CD8-positive, alpha-beta T cell (primary cell): ENCODE measurements at regions of chr19 and their contacts with region 1.

Region 1: DNA sequence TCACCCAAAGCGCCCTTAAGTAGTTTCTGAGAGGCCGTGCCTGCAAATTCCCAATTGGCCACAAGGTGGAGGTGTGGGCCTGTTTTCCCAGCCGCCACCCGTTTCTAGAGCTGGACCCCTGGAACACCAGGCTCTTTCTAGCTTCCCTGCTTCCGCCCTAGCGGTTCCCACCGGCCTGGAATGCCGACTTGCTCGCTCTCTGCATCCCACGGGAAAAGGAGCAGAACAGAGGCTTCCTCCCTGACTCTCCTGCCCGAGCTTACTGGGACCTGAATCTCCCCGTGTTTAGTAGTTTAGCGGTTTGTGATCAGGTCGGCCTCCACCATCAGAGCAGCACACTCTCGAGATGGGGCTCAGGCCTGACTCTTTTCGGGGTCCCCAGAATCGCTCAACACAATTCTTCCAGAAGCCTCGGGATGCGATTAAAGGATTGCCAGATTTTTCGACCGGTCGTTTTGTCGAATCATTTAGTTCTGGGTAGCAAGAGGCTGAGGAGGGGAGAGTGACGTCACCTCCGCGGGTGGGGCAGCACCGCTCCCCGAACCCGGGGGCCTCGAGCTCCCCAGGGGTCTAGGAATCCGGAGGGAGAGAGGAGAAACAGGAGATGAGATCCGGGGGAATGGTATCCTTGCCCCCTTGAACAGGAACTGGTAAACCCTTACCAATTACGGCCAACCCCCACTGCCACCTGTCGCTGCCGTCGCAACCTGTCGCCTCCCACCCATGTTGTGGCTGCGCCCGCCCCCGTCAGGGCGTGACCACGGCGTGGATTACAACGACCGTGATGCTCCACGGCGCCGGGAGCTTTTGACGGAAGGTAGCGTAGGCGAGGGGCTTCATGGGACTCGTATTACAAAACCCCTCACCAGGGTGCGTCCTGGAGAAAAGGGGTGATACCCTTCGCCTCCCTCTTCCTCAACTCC is 8.0 kb downstream of the NAPSA start:
- DNase-seq: peak; percentile 73 to 94 (median 90)
- ATAC-seq: peak; percentile 83
- H3K4me3 ChIP-seq: peak overlapping the region; percentile 62 to 78
- H3K4me3 Mint-ChIP-seq: peak overlapping the region; percentile 89
- H3K27ac ChIP-seq: peak overlapping the region; percentile 90 to 96
- H3K27ac Mint-ChIP-seq: peak overlapping the region; percentile 96
- H3K4me1 ChIP-seq: peaks cover 20% of the 10 kb centered on the region
- H3K4me1 Mint-ChIP-seq: peaks cover 30% of the 10 kb centered on the region
- H3K27me3 ChIP-seq: no peaks in the 10 kb centered on the region
- H3K27me3 Mint-ChIP-seq: peaks cover 3% of the 10 kb centered on the region
- CTCF ChIP-seq: peak; percentile 85

Region 2: GRCh38 chr19:50008532-50008931 is 348.9 kb before region 1 on chr19:
- CTCF ChIA-PET with region 1: no interaction called
- POLR2A ChIA-PET with region 1: no interaction called
- intact Hi-C with region 1: no loop called
- DNase-seq: no peak
- ATAC-seq: no peak
- H3K4me3 ChIP-seq: no peak overlapping the region
- H3K4me3 Mint-ChIP-seq: no peak overlapping the region
- H3K27ac ChIP-seq: no peak overlapping the region
- H3K27ac Mint-ChIP-seq: no peak overlapping the region
- H3K4me1 ChIP-seq: no peaks in the 10 kb centered on the region
- H3K4me1 Mint-ChIP-seq: peaks cover 9% of the 10 kb centered on the region
- H3K27me3 ChIP-seq: no peaks in the 10 kb centered on the region
- H3K27me3 Mint-ChIP-seq: no peaks in the 10 kb centered on the region
- CTCF ChIP-seq: no peak

Region 3: DNA sequence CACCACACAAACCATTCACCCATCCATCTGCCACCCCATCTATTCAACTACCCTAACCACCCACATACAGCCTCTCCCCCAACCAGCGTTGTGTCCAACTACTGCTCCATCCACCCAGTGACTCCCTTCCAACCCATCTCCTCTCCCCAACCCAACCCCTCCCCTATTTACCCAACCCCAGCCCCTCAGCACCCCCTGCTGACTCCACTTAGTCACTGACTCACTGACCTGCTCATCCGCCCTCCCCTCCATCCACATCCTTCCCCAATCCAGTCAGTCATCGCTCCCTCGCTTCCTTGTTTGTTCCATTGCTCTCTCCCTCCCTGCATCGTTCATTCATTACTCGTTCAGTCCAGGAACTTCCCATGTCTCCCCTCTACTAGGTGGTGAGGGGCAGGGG is 67.4 kb before region 1 on chr19:
- CTCF ChIA-PET with region 1: no interaction called
- POLR2A ChIA-PET with region 1: no interaction called
- intact Hi-C with region 1: no loop called
- DNase-seq: no peak
- ATAC-seq: no peak
- H3K4me3 ChIP-seq: no peak overlapping the region
- H3K4me3 Mint-ChIP-seq: no peak overlapping the region
- H3K27ac ChIP-seq: no peak overlapping the region
- H3K27ac Mint-ChIP-seq: no peak overlapping the region
- H3K4me1 ChIP-seq: no peaks in the 10 kb centered on the region
- H3K4me1 Mint-ChIP-seq: no peaks in the 10 kb centered on the region
- H3K27me3 ChIP-seq: peaks cover 0 to 2% of the 10 kb centered on the region in 2 experiments
- H3K27me3 Mint-ChIP-seq: peaks cover 35% of the 10 kb centered on the region
- CTCF ChIP-seq: no peak

Region 4: GRCh38 chr19:50315773-50316448 is 41.5 kb before region 1 on chr19:
- CTCF ChIA-PET with region 1: no interaction called
- POLR2A ChIA-PET with region 1: no interaction called
- intact Hi-C with region 1: no loop called
- DNase-seq: peak in 1 of 9 experiments; percentile 53
- ATAC-seq: peak; percentile 49
- H3K4me3 ChIP-seq: peak overlapping the region in 1 of 2 experiments; percentile 27
- H3K4me3 Mint-ChIP-seq: peak overlapping the region; percentile 42
- H3K27ac ChIP-seq: no peak overlapping the region
- H3K27ac Mint-ChIP-seq: no peak overlapping the region
- H3K4me1 ChIP-seq: peaks cover 12% of the 10 kb centered on the region
- H3K4me1 Mint-ChIP-seq: peaks cover 15% of the 10 kb centered on the region
- H3K27me3 ChIP-seq: peaks cover 20 to 26% of the 10 kb centered on the region in 2 experiments
- H3K27me3 Mint-ChIP-seq: peaks cover 65% of the 10 kb centered on the region
- CTCF ChIP-seq: no peak

Region 5: GRCh38 chr19:50368649-50369570 is 11.5 kb after region 1 on chr19:
- CTCF ChIA-PET with region 1: interaction called, 44 read pairs
- POLR2A ChIA-PET with region 1: no interaction called
- intact Hi-C with region 1: loop called (anchors 1 kb)
- DNase-seq: peak; percentile 59 to 91 (median 79)
- ATAC-seq: peak; percentile 81
- H3K4me3 ChIP-seq: peak overlapping the region; percentile 52 to 66
- H3K4me3 Mint-ChIP-seq: peak overlapping the region; percentile 87
- H3K27ac ChIP-seq: peak overlapping the region; percentile 32 to 49
- H3K27ac Mint-ChIP-seq: peak overlapping the region; percentile 82
- H3K4me1 ChIP-seq: peaks cover 15% of the 10 kb centered on the region
- H3K4me1 Mint-ChIP-seq: peaks cover 28% of the 10 kb centered on the region
- H3K27me3 ChIP-seq: no peaks in the 10 kb centered on the region
- H3K27me3 Mint-ChIP-seq: no peaks in the 10 kb centered on the region
- CTCF ChIP-seq: peak; percentile 86

Region 6: GRCh38 chr19:50383852-50384684 is 26.6 kb after region 1 on chr19 and contains the start of gene POLD1:
- CTCF ChIA-PET with region 1: interaction called, 4 read pairs
- POLR2A ChIA-PET with region 1: interaction called, 10 read pairs
- intact Hi-C with region 1: loop called (anchors 1 kb)
- DNase-seq: peak; percentile 98 to 100 (median 98)
- ATAC-seq: peak; percentile 93
- H3K4me3 ChIP-seq: peak within 1 kb of the TSS; percentile 70 to 79
- H3K4me3 Mint-ChIP-seq: peak within 1 kb of the TSS; percentile 97
- H3K27ac ChIP-seq: peak within 1 kb of the TSS; percentile 45 to 72
- H3K27ac Mint-ChIP-seq: peak within 1 kb of the TSS; percentile 91
- H3K4me1 ChIP-seq: peaks cover 14% of the 10 kb centered on the region
- H3K4me1 Mint-ChIP-seq: peaks cover 33% of the 10 kb centered on the region
- H3K27me3 ChIP-seq: no peaks in the 10 kb centered on the region
- H3K27me3 Mint-ChIP-seq: no peaks in the 10 kb centered on the region
- CTCF ChIP-seq: no peak
- total RNA-seq, gene POLD1: 19.4 to 21.8 TPM

Region 7: DNA sequence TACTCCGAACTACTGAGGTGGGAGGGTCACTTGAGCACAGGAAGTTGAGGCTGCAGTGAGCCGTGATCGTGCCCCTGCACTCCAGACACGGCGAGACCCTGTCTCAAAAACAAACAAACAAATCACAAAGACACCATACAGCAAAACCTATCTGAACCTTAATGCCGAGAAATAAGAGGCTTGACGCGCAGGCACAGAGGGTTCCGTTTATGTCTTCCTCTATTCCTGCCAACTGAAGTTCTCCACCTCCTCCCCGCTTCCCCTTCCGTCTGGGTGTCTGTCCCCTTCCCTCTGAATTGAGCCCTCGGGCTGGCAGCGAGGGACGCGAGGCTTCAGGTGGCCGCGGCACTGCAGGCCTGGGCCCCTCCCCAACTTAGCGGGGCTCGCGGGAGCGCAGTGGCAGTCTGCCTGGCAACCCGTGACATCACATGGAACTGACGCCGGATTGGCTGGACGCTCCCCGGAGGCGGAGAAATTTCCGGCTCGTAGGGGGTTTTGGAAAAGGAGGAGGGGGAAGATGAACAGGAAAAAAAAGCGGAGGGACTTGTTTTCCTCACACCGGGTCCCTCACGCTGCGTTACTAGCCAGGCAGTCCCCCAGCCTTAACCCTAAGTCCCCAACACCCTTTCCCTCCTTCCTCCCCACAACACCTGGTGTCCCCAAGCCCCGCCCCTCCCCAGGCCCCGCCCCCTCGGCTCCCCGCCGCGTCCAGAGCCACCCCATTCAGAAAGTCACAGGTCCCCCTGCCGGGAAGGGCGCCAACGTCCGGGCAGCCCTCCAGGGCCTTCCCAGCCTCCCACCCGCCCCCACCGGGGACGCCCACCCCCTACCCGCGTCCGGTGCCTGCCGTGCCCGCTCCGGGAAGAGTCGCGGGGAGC is 74.1 kb after region 1 on chr19:
- CTCF ChIA-PET with region 1: interaction called, 6 read pairs
- POLR2A ChIA-PET with region 1: no interaction called
- intact Hi-C with region 1: loop called in 1 of 2 experiments (anchors 1 kb)
- DNase-seq: peak; percentile 73 to 94 (median 89)
- ATAC-seq: peak; percentile 94
- H3K4me3 ChIP-seq: peak overlapping the region; percentile 58 to 65
- H3K4me3 Mint-ChIP-seq: peak overlapping the region; percentile 88
- H3K27ac ChIP-seq: peak overlapping the region; percentile 43 to 48
- H3K27ac Mint-ChIP-seq: peak overlapping the region; percentile 78
- H3K4me1 ChIP-seq: peaks cover 9% of the 10 kb centered on the region
- H3K4me1 Mint-ChIP-seq: peaks cover 17% of the 10 kb centered on the region
- H3K27me3 ChIP-seq: peaks cover 4 to 15% of the 10 kb centered on the region in 2 experiments
- H3K27me3 Mint-ChIP-seq: peaks cover 21% of the 10 kb centered on the region
- CTCF ChIP-seq: no peak

Region 8: DNA sequence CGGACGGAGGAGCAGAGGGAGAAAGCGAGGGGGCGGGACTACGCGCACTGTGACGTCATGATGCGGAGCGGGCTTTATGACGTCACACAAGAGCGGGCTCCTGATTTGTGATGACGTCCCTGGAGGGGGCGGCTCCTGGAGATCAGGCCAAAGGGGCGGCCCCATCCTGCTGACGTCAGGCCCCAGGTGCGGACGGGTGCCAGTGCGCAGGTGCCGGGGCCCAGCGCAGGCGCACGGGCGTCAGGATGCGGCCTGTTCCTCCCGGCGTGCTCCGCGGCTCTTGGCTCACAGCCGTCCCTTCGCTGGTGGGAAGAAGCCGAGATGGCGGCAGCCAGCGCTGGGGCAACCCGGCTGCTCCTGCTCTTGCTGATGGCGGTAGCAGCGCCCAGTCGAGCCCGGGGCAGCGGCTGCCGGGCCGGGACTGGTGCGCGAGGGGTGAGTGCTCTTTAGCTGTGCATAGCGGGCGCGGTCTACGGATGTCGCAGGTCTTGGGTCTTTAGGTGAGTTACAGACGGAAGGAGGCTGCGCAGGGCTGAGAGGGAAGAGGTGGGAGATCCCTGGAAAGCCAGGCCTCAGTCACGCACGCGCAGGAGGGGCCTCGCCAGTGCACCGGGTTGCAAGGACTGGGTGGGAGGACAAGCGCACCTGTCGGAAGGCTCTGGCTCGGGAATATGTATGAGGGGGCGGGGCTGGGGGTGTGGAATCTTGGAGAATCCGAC is 118.9 kb after region 1 on chr19 and contains the starts of genes EMC10 and GARIN5A:
- CTCF ChIA-PET with region 1: interaction called, 3 read pairs
- POLR2A ChIA-PET with region 1: no interaction called
- intact Hi-C with region 1: loop called (anchors 1 to 5 kb)
- DNase-seq: peak; percentile 77 to 98 (median 91)
- ATAC-seq: peak; percentile 96
- H3K4me3 ChIP-seq: peak within 1 kb of the TSS; percentile 97 to 99
- H3K4me3 Mint-ChIP-seq: peak within 1 kb of the TSS; percentile 97
- H3K27ac ChIP-seq: peak within 1 kb of the TSS; percentile 91 to 94
- H3K27ac Mint-ChIP-seq: peak within 1 kb of the TSS; percentile 95
- H3K4me1 ChIP-seq: peaks cover 24% of the 10 kb centered on the region
- H3K4me1 Mint-ChIP-seq: peaks cover 22% of the 10 kb centered on the region
- H3K27me3 ChIP-seq: no peaks in the 10 kb centered on the region
- H3K27me3 Mint-ChIP-seq: no peaks in the 10 kb centered on the region
- CTCF ChIP-seq: no peak
- total RNA-seq, gene EMC10: 96.7 to 104 TPM
- total RNA-seq, gene GARIN5A: 0.33 TPM in 1 of 2 experiments, not detected in the other

Region 9: DNA sequence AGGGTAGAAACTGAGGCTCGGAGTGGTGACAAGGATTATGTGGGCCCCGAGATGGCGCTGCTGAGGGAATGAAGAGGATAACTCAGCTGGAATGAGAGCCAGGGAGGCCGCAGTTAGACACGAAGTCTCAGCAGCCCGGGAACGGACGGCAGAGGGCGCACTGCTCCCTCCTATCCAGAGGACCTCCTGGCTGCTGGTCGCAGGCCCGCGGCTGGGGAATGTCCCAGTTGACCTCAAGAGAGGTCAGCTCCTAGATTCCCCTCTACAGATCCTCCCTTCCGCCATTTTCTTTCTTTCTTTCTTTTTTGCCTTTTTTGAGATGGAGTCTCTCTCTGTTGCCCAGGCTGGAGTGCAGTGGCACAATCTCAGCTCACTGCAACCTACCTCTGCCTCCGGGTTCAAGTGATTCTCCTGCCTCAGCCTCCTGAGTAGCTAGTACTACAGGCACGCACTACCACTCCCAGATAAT is 180.4 kb after region 1 on chr19:
- CTCF ChIA-PET with region 1: no interaction called
- POLR2A ChIA-PET with region 1: no interaction called
- intact Hi-C with region 1: no loop called
- DNase-seq: peak in 8 of 9 experiments; percentile 35 to 71 (median 62)
- ATAC-seq: no peak
- H3K4me3 ChIP-seq: no peak overlapping the region
- H3K4me3 Mint-ChIP-seq: no peak overlapping the region
- H3K27ac ChIP-seq: no peak overlapping the region
- H3K27ac Mint-ChIP-seq: no peak overlapping the region
- H3K4me1 ChIP-seq: no peaks in the 10 kb centered on the region
- H3K4me1 Mint-ChIP-seq: peaks cover 3% of the 10 kb centered on the region
- H3K27me3 ChIP-seq: peaks cover 0 to 5% of the 10 kb centered on the region in 2 experiments
- H3K27me3 Mint-ChIP-seq: peaks cover 16% of the 10 kb centered on the region
- CTCF ChIP-seq: peak; percentile 62

Region 10: GRCh38 chr19:50777754-50778303 is 420.4 kb after region 1 on chr19:
- CTCF ChIA-PET with region 1: interaction called, 17 read pairs
- POLR2A ChIA-PET with region 1: interaction called, 3 read pairs
- intact Hi-C with region 1: loop called (anchors 1 to 2 kb)
- DNase-seq: no peak
- ATAC-seq: no peak
- H3K4me3 ChIP-seq: no peak overlapping the region
- H3K4me3 Mint-ChIP-seq: no peak overlapping the region
- H3K27ac ChIP-seq: no peak overlapping the region
- H3K27ac Mint-ChIP-seq: no peak overlapping the region
- H3K4me1 ChIP-seq: peaks cover 4% of the 10 kb centered on the region
- H3K4me1 Mint-ChIP-seq: no peaks in the 10 kb centered on the region
- H3K27me3 ChIP-seq: peaks cover 7 to 15% of the 10 kb centered on the region in 2 experiments
- H3K27me3 Mint-ChIP-seq: peaks cover 58% of the 10 kb centered on the region
- CTCF ChIP-seq: no peak

Region 11: GRCh38 chr19:50922317-50922853 is 564.9 kb after region 1 on chr19:
- CTCF ChIA-PET with region 1: interaction called, 3 read pairs
- POLR2A ChIA-PET with region 1: no interaction called
- intact Hi-C with region 1: loop called (anchors 1 kb)
- DNase-seq: peak; percentile 39 to 86 (median 73)
- ATAC-seq: peak; percentile 84
- H3K4me3 ChIP-seq: no peak overlapping the region
- H3K4me3 Mint-ChIP-seq: no peak overlapping the region
- H3K27ac ChIP-seq: no peak overlapping the region
- H3K27ac Mint-ChIP-seq: no peak overlapping the region
- H3K4me1 ChIP-seq: no peaks in the 10 kb centered on the region
- H3K4me1 Mint-ChIP-seq: peaks cover 4% of the 10 kb centered on the region
- H3K27me3 ChIP-seq: no peaks in the 10 kb centered on the region
- H3K27me3 Mint-ChIP-seq: peaks cover 35% of the 10 kb centered on the region
- CTCF ChIP-seq: peak; percentile 87